ENCODE measurements at regions of chr2 and their contacts with region 1.

Region 1: DNA sequence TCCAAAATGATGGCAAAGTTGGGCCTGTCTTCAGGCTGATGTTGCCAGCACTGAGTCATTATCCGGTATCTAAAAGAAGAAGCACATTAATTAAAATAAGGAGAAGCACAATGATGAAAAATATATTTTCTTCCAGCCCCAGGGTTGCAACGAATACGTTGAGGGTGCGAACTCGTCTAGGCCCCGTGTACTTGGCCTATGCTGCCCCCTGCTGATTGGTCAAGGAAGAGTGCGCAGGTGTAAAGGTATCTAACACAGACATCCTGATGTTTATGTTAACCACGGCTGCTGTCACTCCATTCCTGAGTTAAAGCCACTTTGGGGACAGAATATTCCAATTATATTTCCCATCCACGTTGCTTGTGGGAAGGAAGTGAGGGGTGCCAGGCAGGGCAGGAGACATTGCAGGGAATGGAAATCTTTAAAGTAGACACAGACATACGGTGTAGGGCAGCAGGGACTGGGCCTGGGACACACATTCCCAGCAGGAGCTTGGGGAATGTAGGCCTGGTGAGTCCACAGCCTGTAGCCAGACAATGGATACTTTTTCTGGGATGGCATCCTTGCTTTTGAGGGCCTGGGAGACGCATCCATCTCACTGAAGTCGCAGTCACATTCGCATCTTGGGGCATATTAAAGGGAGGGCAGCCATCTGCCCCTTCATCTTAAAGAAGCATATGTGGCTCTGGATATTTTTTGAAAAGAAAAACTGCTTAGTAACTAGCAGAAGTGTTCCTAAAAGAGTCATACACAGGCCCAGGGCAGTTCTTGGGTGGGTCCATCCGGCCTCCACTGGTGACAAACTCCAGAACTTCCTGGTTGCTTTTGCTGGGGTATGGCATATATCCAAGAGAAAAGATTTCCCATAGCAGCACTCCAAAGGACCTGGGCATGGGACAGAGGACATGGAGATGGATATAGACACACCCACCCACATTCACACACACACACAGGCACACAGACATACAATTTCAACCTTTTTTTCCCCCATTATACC is 81.9 kb downstream of the CLIP4 start:
- DNase-seq: peak; percentile 57
- ATAC-seq: peak; percentile 97
- H3K4me3 ChIP-seq: no peak overlapping the region
- H3K27ac ChIP-seq: no peak overlapping the region
- H3K4me1 ChIP-seq: no peaks in the 10 kb centered on the region
- H3K27me3 ChIP-seq: no peaks in the 10 kb centered on the region
- CTCF ChIP-seq: peak; percentile 81 to 95 (median 89)
- POLR2A ChIP-seq: no peak
- RAD21 ChIP-seq: peak; percentile 98

Region 2: GRCh38 chr2:27989141-27989540 is 1207.9 kb before region 1 on chr2:
- CTCF ChIA-PET with region 1: no interaction called
- POLR2A ChIA-PET with region 1: no interaction called
- RAD21 ChIA-PET with region 1: no interaction called
- intact Hi-C with region 1: no loop called
- DNase-seq: peak; percentile 32
- ATAC-seq: peak; percentile 65; the same call in 1 of the 2 replicates
- H3K4me3 ChIP-seq: no peak overlapping the region
- H3K27ac ChIP-seq: no peak overlapping the region; the same call in 1 of the 2 replicates
- H3K4me1 ChIP-seq: peaks cover 14 to 40% of the 10 kb centered on the region in 2 experiments
- H3K27me3 ChIP-seq: no peaks in the 10 kb centered on the region
- CTCF ChIP-seq: no peak
- POLR2A ChIP-seq: no peak
- RAD21 ChIP-seq: no peak

Region 3: GRCh38 chr2:28835781-28836180 is 361.3 kb before region 1 on chr2:
- CTCF ChIA-PET with region 1: no interaction called
- POLR2A ChIA-PET with region 1: no interaction called
- RAD21 ChIA-PET with region 1: no interaction called
- intact Hi-C with region 1: loop called (anchors 10 kb)
- DNase-seq: no peak
- ATAC-seq: no peak
- H3K4me3 ChIP-seq: no peak overlapping the region
- H3K27ac ChIP-seq: no peak overlapping the region
- H3K4me1 ChIP-seq: no peaks in the 10 kb centered on the region
- H3K27me3 ChIP-seq: no peaks in the 10 kb centered on the region
- CTCF ChIP-seq: no peak
- POLR2A ChIP-seq: no peak
- RAD21 ChIP-seq: no peak

Region 4: DNA sequence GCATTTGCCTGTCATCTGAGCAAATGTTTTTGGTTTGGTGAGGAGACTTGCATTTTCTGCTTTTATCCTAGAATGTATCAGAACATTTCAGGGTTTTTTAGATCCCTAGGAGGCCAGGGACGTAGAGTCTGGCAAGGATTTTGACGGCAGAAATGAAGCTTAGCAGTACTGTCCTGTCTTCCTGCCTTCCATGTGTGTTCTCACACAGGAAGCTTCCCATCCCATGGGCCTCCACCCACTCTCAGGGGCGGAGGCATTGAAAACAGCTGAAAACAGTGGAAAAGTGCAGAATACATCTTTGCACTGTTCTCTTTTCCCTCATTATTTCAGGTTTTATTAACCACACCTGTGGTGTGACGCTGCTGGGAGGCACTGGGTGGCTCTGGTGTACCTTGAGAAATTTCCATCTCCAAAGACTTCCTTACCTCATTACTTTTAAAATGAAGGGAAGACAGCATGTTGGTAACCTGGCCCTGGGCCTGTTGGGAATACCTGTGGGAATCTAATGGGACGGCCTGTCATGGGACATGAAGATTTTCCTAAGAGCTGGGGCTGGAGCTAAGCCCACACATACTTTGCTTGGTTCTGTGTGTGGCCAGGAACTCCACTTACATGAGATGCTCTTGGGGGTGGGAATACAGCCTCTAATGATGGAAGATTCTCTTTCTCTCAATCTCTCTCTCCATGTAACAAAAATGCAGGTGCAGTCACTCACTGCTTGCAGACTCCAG is 143.3 kb before region 1 on chr2:
- CTCF ChIA-PET with region 1: no interaction called
- POLR2A ChIA-PET with region 1: no interaction called
- RAD21 ChIA-PET with region 1: no interaction called
- intact Hi-C with region 1: loop called (anchors 1 kb)
- DNase-seq: peak; percentile 15
- ATAC-seq: peak; percentile 75
- H3K4me3 ChIP-seq: no peak overlapping the region
- H3K27ac ChIP-seq: no peak overlapping the region
- H3K4me1 ChIP-seq: peaks cover 5 to 11% of the 10 kb centered on the region in 2 experiments; a peak in 3 of 4 replicates
- H3K27me3 ChIP-seq: no peaks in the 10 kb centered on the region
- CTCF ChIP-seq: peak; percentile 44 to 51 (median 46); a peak in 5 of 6 replicates
- POLR2A ChIP-seq: no peak
- RAD21 ChIP-seq: peak; percentile 82

Measured in HCT116 (cell line).